Activated CD8-positive, alpha-beta memory T cell treated with anti-CD3 and anti-CD28 coated beads, Interleukin-2, amount 10 ng/mL, durations not matched to agents 7 days and 5 days (primary cell): ENCODE measurements at regions of chr12 and their contacts with region 1.

Region 1: DNA sequence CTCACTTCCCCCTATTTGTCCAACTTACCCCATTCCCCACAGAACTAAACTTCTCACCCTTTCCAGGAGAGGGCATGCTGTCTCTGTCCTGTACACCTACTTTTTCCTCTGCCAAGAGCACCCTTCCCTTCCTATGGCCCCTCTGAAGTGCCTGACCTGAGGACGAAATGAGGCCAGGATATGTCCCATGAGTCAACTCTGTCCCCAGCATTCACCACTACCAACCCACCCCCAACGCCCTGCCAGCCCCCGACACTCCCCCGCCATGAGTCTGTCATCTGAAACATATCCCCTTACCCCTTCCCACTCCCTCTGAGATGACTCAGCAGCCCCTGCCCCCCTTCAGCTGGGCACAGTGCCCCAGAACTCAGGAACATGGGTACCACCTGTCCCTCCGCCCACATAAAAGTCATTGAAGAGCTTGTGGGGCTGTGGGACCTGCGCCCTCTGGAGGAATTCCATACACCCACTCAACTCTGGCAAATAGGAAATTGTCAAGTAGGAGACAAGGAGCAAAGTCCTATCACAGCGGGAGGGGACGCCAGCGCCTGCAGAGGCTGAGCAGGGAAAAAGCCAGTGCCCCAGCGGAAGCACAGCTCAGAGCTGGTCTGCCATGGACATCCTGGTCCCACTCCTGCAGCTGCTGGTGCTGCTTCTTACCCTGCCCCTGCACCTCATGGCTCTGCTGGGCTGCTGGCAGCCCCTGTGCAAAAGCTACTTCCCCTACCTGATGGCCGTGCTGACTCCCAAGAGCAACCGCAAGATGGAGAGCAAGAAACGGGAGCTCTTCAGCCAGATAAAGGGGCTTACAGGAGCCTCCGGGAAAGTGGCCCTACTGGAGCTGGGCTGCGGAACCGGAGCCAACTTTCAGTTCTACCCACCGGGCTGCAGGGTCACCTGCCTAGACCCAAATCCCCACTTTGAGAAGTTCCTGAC is 26.3 kb downstream of the ITGA7 start:
- DNase-seq: no peak
- ATAC-seq: peak; percentile 57
- H3K4me3 Mint-ChIP-seq: no peak overlapping the region
- H3K27ac Mint-ChIP-seq: no peak overlapping the region
- H3K4me1 Mint-ChIP-seq: peaks cover 10% of the 10 kb centered on the region
- H3K27me3 Mint-ChIP-seq: peaks cover 44% of the 10 kb centered on the region

Region 2: GRCh38 chr12:55654511-55655214 is 26.7 kb before region 1 on chr12:
- CTCF ChIA-PET with region 1: interaction called, 12 read pairs
- DNase-seq: no peak
- ATAC-seq: no peak
- H3K4me3 Mint-ChIP-seq: no peak overlapping the region
- H3K27ac Mint-ChIP-seq: no peak overlapping the region
- H3K4me1 Mint-ChIP-seq: peaks cover 2% of the 10 kb centered on the region
- H3K27me3 Mint-ChIP-seq: peaks cover 5% of the 10 kb centered on the region